B cell (primary cell): ENCODE measurements at regions of chr20 and their contacts with region 1.

Region 1: DNA sequence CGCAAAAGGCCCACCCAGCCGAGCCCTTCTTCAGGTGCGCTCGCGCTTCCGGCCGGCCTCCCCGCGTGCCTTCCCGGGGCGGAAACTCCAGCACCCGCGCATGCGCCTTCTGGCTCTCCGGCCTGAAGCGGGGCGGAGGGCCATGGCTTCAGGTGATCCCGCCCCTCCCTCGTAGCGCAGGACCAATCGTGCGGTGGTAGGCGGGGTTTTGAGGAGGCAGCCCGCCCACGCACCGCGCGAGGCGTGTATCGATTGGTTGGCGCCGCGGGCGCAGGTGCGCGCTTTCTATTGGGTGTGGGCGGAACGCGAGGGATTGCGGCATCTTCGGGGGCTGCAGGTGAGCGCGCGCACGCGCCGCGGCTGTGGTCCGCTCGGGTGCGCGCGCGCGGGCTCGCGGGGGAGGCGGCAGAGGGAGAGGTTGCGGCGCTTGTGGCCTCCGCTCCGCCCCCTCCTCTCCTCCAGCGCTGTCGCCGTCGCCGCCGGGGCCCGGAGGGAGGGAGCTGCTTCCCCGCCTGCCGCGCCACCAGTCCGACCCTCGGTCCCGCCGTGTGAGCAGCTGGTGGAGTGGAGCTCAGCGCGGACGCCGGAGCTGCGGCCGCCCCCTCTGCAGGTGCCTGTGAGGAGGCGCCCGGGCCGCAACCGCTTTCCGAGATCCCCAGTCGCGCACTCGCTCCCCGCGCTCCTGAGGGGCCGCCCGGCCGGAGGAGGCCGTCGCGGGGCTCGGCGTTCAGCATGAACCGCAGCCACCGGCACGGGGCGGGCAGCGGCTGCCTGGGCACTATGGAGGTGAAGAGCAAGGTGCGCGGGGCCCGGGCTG is at the start of gene PARD6B:
- DNase-seq: peak; percentile 100
- ATAC-seq: peak; percentile 94
- H3K4me3 ChIP-seq: peak within 1 kb of the TSS; percentile 47 to 81 (median 71)
- H3K4me3 Mint-ChIP-seq: peak within 1 kb of the TSS; percentile 91
- H3K27ac ChIP-seq: peak within 1 kb of the TSS; percentile 39 to 80
- H3K27ac Mint-ChIP-seq: peak within 1 kb of the TSS; percentile 91
- H3K4me1 ChIP-seq: peaks cover 15% of the 10 kb centered on the region in 2 donors
- H3K4me1 Mint-ChIP-seq: peaks cover 21% of the 10 kb centered on the region
- H3K27me3 ChIP-seq: no peaks in the 10 kb centered on the region
- H3K27me3 Mint-ChIP-seq: peaks cover 4% of the 10 kb centered on the region
- CTCF ChIP-seq: no peak
- total RNA-seq, gene PARD6B: 6.0 and 10.1 TPM in 2 replicates

Region 2: GRCh38 chr20:49936153-49937027 is 794.9 kb before region 1 on chr20 and contains the start of gene RNF114:
- CTCF ChIA-PET with region 1: no interaction called
- POLR2A ChIA-PET with region 1: no interaction called
- intact Hi-C with region 1: loop called (anchors 5 kb)
- DNase-seq: peak; percentile 93
- ATAC-seq: peak; percentile 93
- H3K4me3 ChIP-seq: peak within 1 kb of the TSS; percentile 78 to 99 (median 94)
- H3K4me3 Mint-ChIP-seq: peak within 1 kb of the TSS; percentile 99
- H3K27ac ChIP-seq: peak within 1 kb of the TSS; percentile 89 to 90
- H3K27ac Mint-ChIP-seq: peak within 1 kb of the TSS; percentile 93
- H3K4me1 ChIP-seq: peaks cover 33 to 42% of the 10 kb centered on the region in 2 donors
- H3K4me1 Mint-ChIP-seq: peaks cover 49% of the 10 kb centered on the region
- H3K27me3 ChIP-seq: no peaks in the 10 kb centered on the region
- H3K27me3 Mint-ChIP-seq: no peaks in the 10 kb centered on the region
- CTCF ChIP-seq: no peak
- total RNA-seq, gene RNF114: 81.7 and 86.0 TPM in 2 replicates

Region 3: DNA sequence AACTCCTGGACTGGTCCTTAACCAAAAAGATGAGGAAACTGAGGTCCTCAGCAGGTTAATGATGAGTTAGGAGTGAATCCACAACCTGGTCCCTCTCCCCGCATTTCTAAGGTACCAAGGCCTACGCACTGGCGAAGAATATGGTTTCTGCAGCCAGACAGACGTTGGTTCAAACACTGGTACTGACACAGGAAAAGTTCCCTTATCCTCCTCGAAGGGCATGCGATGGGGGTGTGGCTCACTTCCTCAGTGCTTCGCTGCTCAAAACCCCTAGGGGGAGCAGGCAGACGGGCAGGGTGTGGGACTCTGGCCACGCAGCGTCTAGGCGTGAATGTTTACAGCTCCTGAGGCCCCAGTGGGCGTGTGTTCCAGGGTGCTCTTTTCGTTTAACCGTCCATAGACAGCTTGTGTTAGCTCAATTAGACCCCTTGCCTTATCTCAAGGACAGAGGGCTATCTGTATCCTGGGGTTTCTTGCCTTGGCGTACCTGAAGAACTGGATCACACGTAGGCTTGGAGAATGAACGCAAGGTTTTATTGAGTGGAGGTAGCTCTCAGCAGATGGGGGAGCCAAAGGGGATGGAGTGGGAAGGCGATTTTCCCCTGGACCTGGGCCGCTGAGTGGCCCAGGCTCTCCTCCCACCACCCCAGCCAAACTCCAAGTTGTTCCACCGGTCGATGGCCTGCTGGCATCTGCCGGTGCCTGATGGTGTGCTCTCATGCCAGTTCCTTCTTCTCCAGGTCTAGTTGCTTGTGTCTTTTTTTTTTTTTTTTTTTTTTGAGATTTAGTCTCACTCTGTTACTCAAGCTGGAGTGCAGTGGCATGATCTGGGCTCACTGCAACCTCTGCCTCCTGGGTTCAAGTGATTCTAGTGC is 252.9 kb before region 1 on chr20:
- CTCF ChIA-PET with region 1: no interaction called
- POLR2A ChIA-PET with region 1: no interaction called
- intact Hi-C with region 1: loop called (anchors 10 kb)
- DNase-seq: peak; percentile 84
- ATAC-seq: peak; percentile 99
- H3K4me3 ChIP-seq: no peak overlapping the region
- H3K4me3 Mint-ChIP-seq: peak overlapping the region; percentile 44
- H3K27ac ChIP-seq: no peak overlapping the region
- H3K27ac Mint-ChIP-seq: peak overlapping the region; percentile 67
- H3K4me1 ChIP-seq: peaks cover 20 to 32% of the 10 kb centered on the region in 2 donors
- H3K4me1 Mint-ChIP-seq: peaks cover 33% of the 10 kb centered on the region
- H3K27me3 ChIP-seq: no peaks in the 10 kb centered on the region
- H3K27me3 Mint-ChIP-seq: no peaks in the 10 kb centered on the region
- CTCF ChIP-seq: peak; percentile 73

Region 4: DNA sequence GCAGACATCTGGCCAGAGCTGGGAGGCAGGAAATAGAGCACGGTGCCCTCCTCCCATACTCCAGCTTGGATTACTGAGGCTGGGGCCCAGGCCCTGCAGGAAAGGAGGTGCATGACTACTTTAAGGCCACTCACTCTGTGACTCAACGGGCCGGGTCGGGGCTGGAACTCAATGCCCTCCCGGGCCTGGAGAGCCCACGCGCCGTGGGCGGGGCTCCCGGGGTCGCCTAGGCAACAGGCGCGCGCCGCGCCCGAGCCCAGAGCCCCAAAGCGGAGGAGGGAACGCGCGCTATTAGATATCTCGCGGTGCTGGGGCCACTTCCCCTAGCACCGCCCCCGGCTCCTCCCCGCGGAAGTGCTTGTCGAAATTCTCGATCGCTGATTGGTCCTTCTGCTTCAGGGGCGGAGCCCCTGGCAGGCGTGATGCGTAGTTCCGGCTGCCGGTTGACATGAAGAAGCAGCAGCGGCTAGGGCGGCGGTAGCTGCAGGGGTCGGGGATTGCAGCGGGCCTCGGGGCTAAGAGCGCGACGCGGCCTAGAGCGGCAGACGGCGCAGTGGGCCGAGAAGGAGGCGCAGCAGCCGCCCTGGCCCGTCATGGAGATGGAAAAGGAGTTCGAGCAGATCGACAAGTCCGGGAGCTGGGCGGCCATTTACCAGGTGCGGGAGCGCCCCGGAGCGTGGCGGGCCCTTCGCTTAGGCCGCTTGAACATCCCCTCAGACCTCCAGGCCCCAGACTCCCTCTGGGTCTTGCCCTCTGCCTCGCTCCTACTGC is 221.1 kb before region 1 on chr20 and contains the start of gene PTPN1:
- CTCF ChIA-PET with region 1: no interaction called
- POLR2A ChIA-PET with region 1: no interaction called
- intact Hi-C with region 1: loop called (anchors 2 kb)
- DNase-seq: peak; percentile 100
- ATAC-seq: peak; percentile 92
- H3K4me3 ChIP-seq: peak within 1 kb of the TSS; percentile 67 to 100 (median 95)
- H3K4me3 Mint-ChIP-seq: peak within 1 kb of the TSS; percentile 98
- H3K27ac ChIP-seq: peak within 1 kb of the TSS; percentile 91 to 95
- H3K27ac Mint-ChIP-seq: peak within 1 kb of the TSS; percentile 92
- H3K4me1 ChIP-seq: peaks cover 45 to 50% of the 10 kb centered on the region in 2 donors
- H3K4me1 Mint-ChIP-seq: peaks cover 50% of the 10 kb centered on the region
- H3K27me3 ChIP-seq: no peaks in the 10 kb centered on the region
- H3K27me3 Mint-ChIP-seq: no peaks in the 10 kb centered on the region
- CTCF ChIP-seq: no peak
- total RNA-seq, gene PTPN1: 134 TPM in 2 replicates

Region 5: GRCh38 chr20:50929299-50930138 is 198.3 kb after region 1 on chr20:
- CTCF ChIA-PET with region 1: no interaction called
- POLR2A ChIA-PET with region 1: interaction called, 7 read pairs
- intact Hi-C with region 1: loop called (anchors 1 kb)
- DNase-seq: peak; percentile 95
- ATAC-seq: peak; percentile 55
- H3K4me3 ChIP-seq: peak overlapping the region; percentile 62 to 85 (median 76)
- H3K4me3 Mint-ChIP-seq: peak overlapping the region; percentile 92
- H3K27ac ChIP-seq: peak overlapping the region; percentile 62 to 68
- H3K27ac Mint-ChIP-seq: peak overlapping the region; percentile 91
- H3K4me1 ChIP-seq: peaks cover 24 to 28% of the 10 kb centered on the region in 2 donors
- H3K4me1 Mint-ChIP-seq: peaks cover 53% of the 10 kb centered on the region
- H3K27me3 ChIP-seq: no peaks in the 10 kb centered on the region
- H3K27me3 Mint-ChIP-seq: no peaks in the 10 kb centered on the region
- CTCF ChIP-seq: peak; percentile 95

Region 6: GRCh38 chr20:51541189-51542032 is 810.1 kb after region 1 on chr20:
- CTCF ChIA-PET with region 1: no interaction called
- POLR2A ChIA-PET with region 1: no interaction called
- intact Hi-C with region 1: loop called (anchors 10 kb)
- DNase-seq: peak; percentile 86
- ATAC-seq: peak; percentile 50
- H3K4me3 ChIP-seq: peak overlapping the region; percentile 61 to 89 (median 74)
- H3K4me3 Mint-ChIP-seq: peak overlapping the region; percentile 97
- H3K27ac ChIP-seq: peak overlapping the region; percentile 88 to 96
- H3K27ac Mint-ChIP-seq: peak overlapping the region; percentile 96
- H3K4me1 ChIP-seq: peaks cover 30 to 50% of the 10 kb centered on the region in 2 donors
- H3K4me1 Mint-ChIP-seq: peaks cover 54% of the 10 kb centered on the region
- H3K27me3 ChIP-seq: peaks cover 0 to 4% (median 0%) of the 10 kb centered on the region in 4 experiments
- H3K27me3 Mint-ChIP-seq: no peaks in the 10 kb centered on the region
- CTCF ChIP-seq: no peak